HCT116 (cell line): ENCODE measurements at regions of chr3 and their contacts with region 1.

Region 1: DNA sequence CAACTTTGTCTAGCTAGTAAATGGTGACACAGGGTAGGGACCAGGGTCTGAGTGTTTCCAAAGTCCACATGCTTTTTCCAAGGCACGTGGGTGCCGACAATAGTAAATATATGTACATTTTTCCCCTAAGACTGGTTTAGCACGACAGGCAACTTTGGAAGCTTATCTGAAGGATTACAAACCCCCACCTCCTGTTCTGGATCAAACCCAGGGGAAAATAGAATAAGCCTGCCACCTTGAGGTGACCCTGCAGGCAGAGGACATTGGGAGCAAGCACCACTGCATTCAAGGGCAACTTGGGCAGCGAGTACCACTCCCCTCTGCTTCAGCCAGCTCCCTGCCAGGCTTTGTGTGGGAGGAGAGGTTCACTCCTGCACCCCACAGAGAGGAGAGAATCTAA is 44.8 kb downstream of the KBTBD12 start:
- DNase-seq: no peak
- ATAC-seq: peak; percentile 57; the same call in 1 of the 2 replicates
- H3K4me3 ChIP-seq: no peak overlapping the region
- H3K27ac ChIP-seq: no peak overlapping the region
- H3K4me1 ChIP-seq: peaks cover 3 to 13% of the 10 kb centered on the region in 2 experiments; a peak in 2 of 4 replicates
- H3K27me3 ChIP-seq: no peaks in the 10 kb centered on the region
- CTCF ChIP-seq: peak; percentile 39 to 60 (median 42); a peak in 5 of 6 replicates
- POLR2A ChIP-seq: no peak
- RAD21 ChIP-seq: peak; percentile 77

Region 2: GRCh38 chr3:127690823-127691452 is 268.9 kb before region 1 on chr3:
- CTCF ChIA-PET with region 1: interaction called, 17 read pairs
- POLR2A ChIA-PET with region 1: no interaction called
- RAD21 ChIA-PET with region 1: interaction called in 1 of 2 experiments, 3 read pairs
- intact Hi-C with region 1: no loop called
- DNase-seq: peak; percentile 43
- ATAC-seq: peak; percentile 95
- H3K4me3 ChIP-seq: no peak overlapping the region
- H3K27ac ChIP-seq: peak overlapping the region; percentile 30
- H3K4me1 ChIP-seq: peaks cover 13 to 36% of the 10 kb centered on the region in 2 experiments
- H3K27me3 ChIP-seq: no peaks in the 10 kb centered on the region
- CTCF ChIP-seq: peak; percentile 70 to 84 (median 84)
- POLR2A ChIP-seq: no peak
- RAD21 ChIP-seq: peak; percentile 90

Region 3: DNA sequence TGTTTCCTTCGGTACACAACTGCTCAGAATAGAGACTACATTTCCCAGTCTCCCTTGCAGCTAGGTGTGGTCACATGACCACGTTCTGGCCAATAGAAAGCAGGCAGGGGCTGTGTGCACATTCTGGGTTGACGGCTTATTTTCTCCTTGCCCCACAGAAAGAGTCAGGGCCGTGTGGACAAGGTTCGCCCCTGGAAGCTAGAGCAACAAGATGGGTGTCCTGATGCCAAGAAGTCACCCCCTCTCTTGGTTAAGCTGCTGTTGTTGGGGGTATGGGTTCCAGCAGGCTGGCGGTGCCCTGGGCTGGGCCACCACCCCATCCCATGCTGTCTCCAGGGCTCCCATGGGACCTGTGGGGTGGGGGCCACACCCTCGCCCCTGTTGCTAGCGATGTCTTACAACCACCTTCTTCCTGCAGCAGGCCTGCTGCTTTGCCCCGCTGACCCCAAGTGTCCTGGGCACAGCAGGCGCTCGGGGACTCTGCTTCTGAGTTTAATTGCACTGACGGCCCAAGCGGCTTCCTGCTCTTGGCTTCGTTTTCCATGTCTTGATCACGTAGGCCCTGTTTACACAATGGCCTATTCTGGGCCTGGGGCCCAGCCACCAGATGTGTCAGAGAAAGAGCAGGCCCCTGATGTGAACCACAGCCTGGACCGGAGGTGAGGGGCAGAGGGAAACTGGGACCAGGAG is 262.1 kb before region 1 on chr3:
- CTCF ChIA-PET with region 1: interaction called, 17 read pairs
- POLR2A ChIA-PET with region 1: no interaction called
- RAD21 ChIA-PET with region 1: no interaction called
- intact Hi-C with region 1: no loop called
- DNase-seq: peak; percentile 50
- ATAC-seq: peak; percentile 86
- H3K4me3 ChIP-seq: no peak overlapping the region
- H3K27ac ChIP-seq: no peak overlapping the region
- H3K4me1 ChIP-seq: peaks cover 2 to 29% of the 10 kb centered on the region in 2 experiments; a peak in 2 of 4 replicates
- H3K27me3 ChIP-seq: no peaks in the 10 kb centered on the region
- CTCF ChIP-seq: no peak
- POLR2A ChIP-seq: no peak
- RAD21 ChIP-seq: no peak

Region 4: DNA sequence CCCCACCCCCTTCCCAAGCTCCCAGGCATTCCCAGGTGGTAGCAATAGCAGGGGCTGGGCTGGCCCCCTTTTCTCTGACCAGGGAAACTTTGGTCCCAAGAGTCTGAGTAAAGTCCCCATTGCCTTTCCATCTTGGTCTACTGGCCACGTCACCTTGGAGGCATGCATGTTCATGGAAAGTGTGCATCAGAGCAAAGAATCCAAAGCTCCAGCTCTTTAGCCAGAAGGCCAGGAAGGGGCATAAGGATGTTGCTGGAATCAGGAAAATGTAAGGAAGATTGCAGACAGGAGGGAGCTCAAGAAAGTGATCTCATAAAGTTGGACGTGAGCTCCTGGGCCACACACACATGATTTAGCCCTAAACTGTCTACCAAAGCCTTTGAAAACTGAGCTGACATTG is 18.8 kb after region 1 on chr3:
- CTCF ChIA-PET with region 1: no interaction called
- POLR2A ChIA-PET with region 1: no interaction called
- RAD21 ChIA-PET with region 1: no interaction called
- intact Hi-C with region 1: no loop called
- DNase-seq: no peak
- ATAC-seq: no peak
- H3K4me3 ChIP-seq: no peak overlapping the region
- H3K27ac ChIP-seq: no peak overlapping the region
- H3K4me1 ChIP-seq: no peaks in the 10 kb centered on the region
- H3K27me3 ChIP-seq: no peaks in the 10 kb centered on the region
- CTCF ChIP-seq: no peak
- POLR2A ChIP-seq: no peak
- RAD21 ChIP-seq: no peak